AG04449 (cell line): ENCODE measurements at regions of chr14 and their contacts with region 1.

Region 1: GRCh38 chr14:80987235-80988032 is 32.0 kb downstream of the TSHR start:
- DNase-seq: no peak
- H3K4me3 ChIP-seq: no peak overlapping the region
- CTCF ChIP-seq: peak; percentile 89

Region 2: GRCh38 chr14:80862983-80863382 is 124.5 kb before region 1 on chr14:
- CTCF ChIA-PET with region 1: interaction called, 18 read pairs
- POLR2A ChIA-PET with region 1: no interaction called
- DNase-seq: no peak
- H3K4me3 ChIP-seq: no peak overlapping the region
- CTCF ChIP-seq: no peak

Region 3: DNA sequence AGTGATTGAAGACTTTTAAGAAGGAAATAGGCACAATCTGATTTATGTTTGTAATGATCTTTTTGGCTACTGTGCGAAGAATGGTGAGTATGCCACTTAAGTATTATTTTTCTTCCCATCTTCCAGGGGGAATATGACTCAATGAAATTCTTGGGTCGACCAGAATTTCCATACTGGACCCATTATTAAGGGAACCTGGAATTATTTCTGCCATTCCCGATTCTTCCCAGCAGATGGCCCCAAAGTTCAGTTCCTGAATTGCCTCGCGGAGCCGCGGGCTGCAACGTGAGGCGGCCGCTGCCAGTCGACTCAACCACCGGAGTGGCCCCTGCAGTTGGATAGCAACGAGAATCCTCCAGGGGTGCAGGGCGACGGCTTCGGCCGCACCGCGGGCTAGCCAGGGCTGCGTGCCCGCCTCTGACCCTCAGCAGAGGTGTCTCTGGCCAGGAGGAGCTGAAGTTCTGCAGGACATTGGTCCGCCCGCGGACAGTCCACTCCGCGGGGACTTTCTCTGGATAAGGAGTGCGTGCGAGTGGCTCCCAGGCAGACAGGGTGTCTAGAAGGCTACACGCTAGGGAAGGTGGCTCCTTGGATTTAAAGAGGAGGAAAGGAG is 32.6 kb before region 1 on chr14:
- CTCF ChIA-PET with region 1: interaction called, 138 read pairs
- POLR2A ChIA-PET with region 1: no interaction called
- DNase-seq: peak; percentile 21
- H3K4me3 ChIP-seq: peak overlapping the region; percentile 65
- CTCF ChIP-seq: peak; percentile 59

Region 4: GRCh38 chr14:80965037-80965436 is 22.4 kb before region 1 on chr14:
- CTCF ChIA-PET with region 1: interaction called, 138 read pairs
- POLR2A ChIA-PET with region 1: no interaction called
- DNase-seq: no peak
- H3K4me3 ChIP-seq: no peak overlapping the region
- CTCF ChIP-seq: no peak

Region 5: GRCh38 chr14:80973931-80974641 is 13.3 kb before region 1 on chr14:
- CTCF ChIA-PET with region 1: interaction called, 90 read pairs
- POLR2A ChIA-PET with region 1: no interaction called
- DNase-seq: peak; percentile 46
- H3K4me3 ChIP-seq: no peak overlapping the region
- CTCF ChIP-seq: no peak

Region 6: DNA sequence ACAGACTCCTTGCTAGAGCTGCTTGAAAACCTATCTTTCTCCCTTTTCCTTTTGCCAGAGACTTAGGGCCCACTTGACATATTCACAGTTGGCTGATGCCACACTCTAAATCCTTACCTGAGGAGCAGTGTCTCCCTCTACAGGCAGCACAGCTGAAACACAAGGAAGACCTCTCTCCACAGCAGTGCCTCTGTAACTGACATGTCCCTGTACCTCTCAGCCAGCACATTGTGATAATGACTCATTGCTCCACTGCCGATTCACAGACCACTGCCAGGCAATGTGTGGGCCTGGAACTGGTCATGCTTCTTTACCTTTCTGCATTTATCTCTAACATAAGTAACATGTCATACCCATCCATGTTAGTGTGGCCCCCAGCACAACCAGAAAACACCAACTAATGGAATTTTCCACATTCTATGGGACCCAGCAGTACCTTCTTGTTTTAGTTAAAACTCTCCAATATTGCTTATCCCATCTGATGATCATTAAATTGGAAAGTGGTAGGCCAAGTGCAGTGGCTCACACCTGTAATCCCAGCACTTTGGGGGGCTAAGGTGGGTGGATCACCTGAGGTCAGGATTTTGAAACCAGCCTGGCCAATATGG is 176.8 kb after region 1 on chr14:
- CTCF ChIA-PET with region 1: interaction called, 34 read pairs
- POLR2A ChIA-PET with region 1: no interaction called
- DNase-seq: no peak
- H3K4me3 ChIP-seq: no peak overlapping the region
- CTCF ChIP-seq: peak; percentile 59

Region 7: GRCh38 chr14:81170104-81170828 is 182.8 kb after region 1 on chr14:
- CTCF ChIA-PET with region 1: interaction called, 34 read pairs
- POLR2A ChIA-PET with region 1: no interaction called
- DNase-seq: peak; percentile 37
- H3K4me3 ChIP-seq: peak overlapping the region; percentile 72
- CTCF ChIP-seq: peak; percentile 69